Dendritic cell treated with granulocyte-macrophage colony-stimulating factor and Interleukin-4, amounts not matched to agents 40 ng/mL and 50 ng/mL, for 4 days (primary cell): ENCODE measurements at regions of chr17 and their contacts with region 1.

Region 1: GRCh38 chr17:63741221-63742049 is at the start of gene STRADA:
- H3K4me3 Mint-ChIP-seq: peak within 1 kb of the TSS; percentile 99
- H3K27ac Mint-ChIP-seq: peak within 1 kb of the TSS; percentile 98
- H3K4me1 Mint-ChIP-seq: peaks cover 25% of the 10 kb centered on the region
- H3K27me3 Mint-ChIP-seq: no peaks in the 10 kb centered on the region

Region 2: DNA sequence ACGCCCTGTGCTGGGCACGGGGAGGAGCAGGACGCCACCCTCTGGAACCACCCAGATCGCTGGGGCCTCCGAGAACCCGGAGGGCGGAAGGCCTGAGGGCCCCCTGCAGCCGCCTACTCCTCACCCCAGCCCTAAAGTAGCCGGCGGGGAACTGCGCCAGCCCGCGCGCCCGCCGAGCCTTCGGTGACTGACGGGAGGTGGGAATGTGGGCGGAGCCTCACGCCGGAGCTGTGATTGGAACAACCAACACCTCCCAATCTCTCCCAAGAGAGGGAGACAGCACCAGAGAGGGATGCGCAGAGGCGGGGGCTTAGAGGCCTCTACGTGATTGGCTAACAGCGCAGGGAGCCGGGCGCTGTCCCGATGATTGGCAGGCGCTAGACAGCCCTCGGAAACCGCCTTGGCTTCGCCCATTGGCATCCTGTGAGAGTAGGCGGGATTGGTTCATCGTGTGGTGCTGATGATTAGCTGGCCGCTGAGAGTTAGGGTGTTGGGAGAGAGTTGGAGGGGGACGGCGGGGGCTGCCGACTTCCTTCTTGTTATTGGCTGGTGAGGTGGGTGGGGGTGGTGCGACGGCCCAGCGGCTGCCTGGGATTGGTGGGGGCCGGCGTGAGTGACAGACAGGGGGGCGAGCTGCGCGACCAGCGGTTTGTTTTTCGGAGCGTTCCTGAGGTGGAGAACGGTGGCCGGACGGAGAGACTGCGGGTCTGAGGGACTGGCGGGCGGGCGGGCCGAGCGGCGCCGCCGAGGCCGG is 119.5 kb before region 1 on chr17 and contains the start of gene MAP3K3:
- intact Hi-C with region 1: loop called (anchors 5 kb)
- H3K4me3 Mint-ChIP-seq: peak within 1 kb of the TSS; percentile 99
- H3K27ac Mint-ChIP-seq: peak within 1 kb of the TSS; percentile 93
- H3K4me1 Mint-ChIP-seq: peaks cover 30% of the 10 kb centered on the region
- H3K27me3 Mint-ChIP-seq: peaks cover 6% of the 10 kb centered on the region

Region 3: DNA sequence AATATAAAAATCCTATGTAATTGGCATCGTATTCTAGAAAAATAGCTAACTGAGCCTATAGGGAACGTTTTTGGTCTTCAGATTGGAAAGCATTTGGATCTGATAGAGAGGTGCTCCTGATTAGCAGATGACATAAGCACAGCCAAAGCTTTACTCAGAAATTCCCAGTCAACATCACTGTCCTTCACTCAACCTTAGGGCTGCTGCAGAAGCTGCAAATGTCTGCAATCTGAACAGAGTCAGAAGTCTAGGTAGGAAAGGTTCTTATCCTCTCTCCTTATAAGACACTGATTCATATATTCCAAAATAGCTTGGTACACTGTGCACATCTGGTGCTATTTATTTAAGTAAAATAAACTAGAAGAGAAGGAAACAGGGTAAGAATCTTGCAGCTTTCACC is 19.0 kb before region 1 on chr17:
- intact Hi-C with region 1: no loop called
- H3K4me3 Mint-ChIP-seq: no peak overlapping the region
- H3K27ac Mint-ChIP-seq: no peak overlapping the region
- H3K4me1 Mint-ChIP-seq: no peaks in the 10 kb centered on the region
- H3K27me3 Mint-ChIP-seq: no peaks in the 10 kb centered on the region

Region 4: GRCh38 chr17:63760771-63761539 is 19.5 kb after region 1 on chr17:
- intact Hi-C with region 1: no loop called
- H3K4me3 Mint-ChIP-seq: peak overlapping the region; percentile 26
- H3K27ac Mint-ChIP-seq: peak overlapping the region; percentile 82
- H3K4me1 Mint-ChIP-seq: peaks cover 36% of the 10 kb centered on the region
- H3K27me3 Mint-ChIP-seq: no peaks in the 10 kb centered on the region

Region 5: DNA sequence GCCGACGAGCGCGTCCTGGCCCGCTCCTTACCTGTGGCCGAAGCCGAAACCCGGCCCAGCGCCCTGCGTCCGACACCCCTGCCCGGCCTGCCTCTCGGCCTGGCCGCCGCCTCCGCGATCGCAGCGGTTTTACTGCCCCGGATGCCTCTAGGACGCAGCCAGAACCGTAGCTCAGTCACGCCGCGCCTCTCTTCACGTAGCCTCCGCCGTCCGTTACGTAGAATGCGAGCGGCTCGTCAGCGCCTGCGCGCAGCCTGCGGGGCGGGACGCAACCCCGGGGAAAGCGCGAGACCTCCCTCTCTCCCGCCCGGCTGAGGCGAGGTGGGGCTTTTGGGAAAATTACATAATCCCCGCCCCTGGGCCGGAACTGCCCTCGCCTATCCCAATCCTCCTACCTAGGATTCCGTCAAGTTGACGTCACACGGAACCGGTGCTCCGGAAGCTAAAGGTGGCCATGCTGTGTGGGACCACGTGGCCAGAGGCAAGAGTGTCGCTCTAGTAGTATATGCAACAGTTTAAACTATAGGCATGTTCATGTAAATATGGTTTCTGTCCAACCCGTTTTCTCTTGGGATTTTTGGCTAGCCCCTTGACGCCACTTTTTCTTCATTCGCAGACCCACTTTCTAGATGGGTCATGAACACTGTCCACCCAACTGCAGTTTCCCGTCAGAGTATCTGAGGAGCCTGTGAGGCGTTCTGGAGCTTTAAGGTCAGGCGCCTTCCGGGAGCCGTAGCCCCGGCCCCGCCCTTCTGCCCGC is 32.1 kb after region 1 on chr17 and contains the start of gene CCDC47:
- intact Hi-C with region 1: loop called (anchors 1 kb)
- H3K4me3 Mint-ChIP-seq: peak within 1 kb of the TSS; percentile 98
- H3K27ac Mint-ChIP-seq: peak within 1 kb of the TSS; percentile 98
- H3K4me1 Mint-ChIP-seq: peaks cover 50% of the 10 kb centered on the region
- H3K27me3 Mint-ChIP-seq: no peaks in the 10 kb centered on the region